Adrenal gland (tissue), 19 donors: ENCODE measurements at regions of chr1 and their contacts with region 1.

Region 1: GRCh38 chr1:202750758-202751157 is 40.5 kb upstream of the SYT2 start:
- DNase-seq: no peak
- H3K4me3 ChIP-seq: no peak overlapping the region
- H3K27ac ChIP-seq: no peak overlapping the region
- H3K4me1 ChIP-seq: no peaks in the 10 kb centered on the region
- H3K27me3 ChIP-seq: no peaks in the 10 kb centered on the region
- CTCF ChIP-seq: peak in 3 of 6 experiments; percentile 11 to 25 (median 21)
- POLR2A ChIP-seq: no peak

Region 2: GRCh38 chr1:202835548-202836090 is 84.9 kb after region 1 on chr1:
- intact Hi-C with region 1: no loop called
- DNase-seq: no peak
- H3K4me3 ChIP-seq: no peak overlapping the region
- H3K27ac ChIP-seq: no peak overlapping the region
- H3K4me1 ChIP-seq: no peaks in the 10 kb centered on the region
- H3K27me3 ChIP-seq: no peaks in the 10 kb centered on the region
- CTCF ChIP-seq: no peak
- POLR2A ChIP-seq: no peak

Region 3: GRCh38 chr1:202998836-202999750 is 248.3 kb after region 1 on chr1:
- intact Hi-C with region 1: loop called in 1 of 2 experiments (anchors 10 kb)
- DNase-seq: peak; percentile 29 to 82 (median 62)
- H3K4me3 ChIP-seq: no peak overlapping the region
- H3K27ac ChIP-seq: no peak overlapping the region
- H3K4me1 ChIP-seq: no peaks in the 10 kb centered on the region
- H3K27me3 ChIP-seq: peaks cover 3% of the 10 kb centered on the region
- CTCF ChIP-seq: peak; percentile 68 to 88 (median 74)
- POLR2A ChIP-seq: no peak